Activated T-helper 1 cell treated with anti-CD3 and anti-CD28 coated beads, Interleukin-12 subunit alpha, Interleukin-12 subunit beta, Interleukin-2, Interleukin-4 antibody, amounts not matched to agents 30 ng/mL and 10 ng/mL and 1 ng/mL, durations not matched to agents 14 hours and 24 hours and 36 hours (primary cell): ENCODE measurements at regions of chr16 and their contacts with region 1.

Region 1: DNA sequence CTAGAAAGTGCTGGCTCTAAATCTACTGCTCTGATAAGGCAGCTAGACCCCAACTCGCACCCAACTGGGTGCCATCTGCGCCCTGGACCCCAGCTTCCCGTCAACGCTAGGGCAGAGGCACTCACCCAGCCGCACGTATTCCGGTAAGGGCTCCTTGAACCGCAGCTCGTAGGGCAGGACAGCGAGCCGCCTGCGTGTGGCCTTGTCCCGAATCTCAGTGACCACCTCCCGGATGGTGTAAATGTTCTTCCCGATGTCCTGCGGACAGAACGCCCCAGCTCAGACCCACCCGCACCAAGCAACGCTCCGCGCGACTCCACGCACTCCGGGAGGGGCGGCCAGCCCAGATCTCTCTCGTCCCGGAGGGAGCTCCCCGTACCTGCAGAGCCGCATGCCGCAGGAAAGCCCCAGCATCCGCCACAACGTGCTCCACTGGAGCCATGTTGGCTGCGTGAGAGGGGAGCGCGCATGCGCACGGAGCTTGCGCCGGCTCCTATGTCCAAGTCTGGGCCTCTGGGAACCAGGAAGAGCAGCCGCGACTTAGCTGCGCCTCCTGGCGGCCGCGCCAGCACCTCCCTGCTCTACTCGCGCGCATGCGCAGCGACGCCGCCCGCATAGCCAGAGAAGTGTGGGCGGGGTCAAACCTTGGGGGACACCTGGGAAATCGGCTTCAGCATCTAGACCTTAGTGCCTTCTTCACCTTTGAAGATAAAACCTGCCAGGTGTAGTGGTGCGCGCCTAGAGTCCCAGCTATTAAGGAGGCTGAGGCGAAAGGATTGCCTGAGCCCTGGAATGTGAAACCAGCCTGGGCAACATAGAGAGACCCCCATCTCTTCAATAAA is at the start of gene NOB1:
- DNase-seq: peak; percentile 97
- H3K4me3 Mint-ChIP-seq: peak within 1 kb of the TSS; percentile 99
- H3K27ac Mint-ChIP-seq: peak within 1 kb of the TSS; percentile 98
- H3K4me1 Mint-ChIP-seq: peaks cover 32% of the 10 kb centered on the region
- H3K27me3 Mint-ChIP-seq: peaks cover 2% of the 10 kb centered on the region
- total RNA-seq, gene NOB1: 132 and 133 TPM in 2 replicates

Region 2: GRCh38 chr16:69424053-69424934 is 330.4 kb before region 1 on chr16 and contains the start of gene CYB5B:
- intact Hi-C with region 1: no loop called
- DNase-seq: peak; percentile 91
- H3K4me3 Mint-ChIP-seq: peak within 1 kb of the TSS; percentile 92
- H3K27ac Mint-ChIP-seq: peak within 1 kb of the TSS; percentile 90
- H3K4me1 Mint-ChIP-seq: peaks cover 25% of the 10 kb centered on the region
- H3K27me3 Mint-ChIP-seq: no peaks in the 10 kb centered on the region
- total RNA-seq, gene CYB5B: 157 and 166 TPM in 2 replicates

Region 3: DNA sequence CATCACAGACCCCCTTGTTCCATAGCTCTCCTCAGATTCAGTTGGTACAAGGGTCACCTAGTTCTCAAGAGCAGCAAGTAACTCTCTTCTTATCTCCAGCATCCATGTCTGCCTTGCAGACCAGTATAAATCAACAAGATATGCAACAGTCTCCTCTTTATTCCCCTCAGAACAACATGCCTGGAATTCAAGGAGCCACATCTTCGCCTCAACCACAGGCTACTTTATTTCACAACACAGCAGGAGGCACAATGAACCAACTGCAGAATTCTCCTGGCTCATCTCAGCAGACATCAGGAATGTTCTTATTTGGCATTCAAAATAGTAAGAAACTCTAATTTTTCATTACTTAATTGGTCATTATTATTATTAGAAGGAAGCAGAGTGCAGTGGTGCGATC is 60.8 kb before region 1 on chr16:
- intact Hi-C with region 1: no loop called
- DNase-seq: no peak
- H3K4me3 Mint-ChIP-seq: no peak overlapping the region
- H3K27ac Mint-ChIP-seq: no peak overlapping the region
- H3K4me1 Mint-ChIP-seq: peaks cover 20% of the 10 kb centered on the region
- H3K27me3 Mint-ChIP-seq: no peaks in the 10 kb centered on the region

Region 4: GRCh38 chr16:69709456-69710084 is 45.1 kb before region 1 on chr16:
- intact Hi-C with region 1: loop called (anchors 1 kb)
- DNase-seq: no peak
- H3K4me3 Mint-ChIP-seq: no peak overlapping the region
- H3K27ac Mint-ChIP-seq: no peak overlapping the region
- H3K4me1 Mint-ChIP-seq: peaks cover 7% of the 10 kb centered on the region
- H3K27me3 Mint-ChIP-seq: no peaks in the 10 kb centered on the region